Testis (tissue), 5 donors: ENCODE measurements at regions of chr7 and their contacts with region 1.

Region 1: DNA sequence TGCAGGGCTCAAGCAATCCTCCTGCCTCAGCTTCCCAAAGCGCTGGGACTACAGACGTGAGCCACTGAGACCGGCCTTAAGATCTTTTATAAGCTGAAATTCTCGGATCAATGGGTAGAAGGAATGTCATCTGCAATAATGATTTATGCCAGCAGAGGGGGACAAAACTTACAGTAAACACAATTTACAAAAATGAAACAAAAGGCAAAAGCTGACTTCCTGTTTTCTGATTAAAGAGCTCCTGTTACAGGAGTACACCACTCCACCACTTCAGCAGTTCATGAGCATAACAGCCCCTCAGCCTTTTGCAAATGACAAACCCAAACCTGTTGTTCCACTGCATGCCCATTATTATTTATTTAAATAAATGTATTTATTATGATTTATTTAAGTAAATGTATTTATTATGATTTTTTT is 88.5 kb upstream of the ATP6V0A4 start:
- DNase-seq: peak; percentile 28
- H3K4me3 ChIP-seq: no peak overlapping the region
- H3K27ac ChIP-seq: no peak overlapping the region
- H3K4me1 ChIP-seq: no peaks in the 10 kb centered on the region
- H3K27me3 ChIP-seq: no peaks in the 10 kb centered on the region
- CTCF ChIP-seq: peak; percentile 51 to 71 (median 58)
- POLR2A ChIP-seq: no peak

Region 2: GRCh38 chr7:138981332-138982203 is 95.1 kb after region 1 on chr7 and contains the start of gene KIAA1549:
- intact Hi-C with region 1: loop called (anchors 10 kb)
- DNase-seq: peak; percentile 53
- H3K4me3 ChIP-seq: peak within 1 kb of the TSS; percentile 56 to 60
- H3K27ac ChIP-seq: peak within 1 kb of the TSS in 1 of 2 donors; percentile 37
- H3K4me1 ChIP-seq: no peaks in the 10 kb centered on the region
- H3K27me3 ChIP-seq: no peaks in the 10 kb centered on the region
- CTCF ChIP-seq: peak in 1 of 3 experiments; percentile 49
- POLR2A ChIP-seq: no peak
- total RNA-seq, gene KIAA1549: 7.4 to 8.0 TPM